ENCODE measurements at regions of chr3 and their contacts with region 1.

Region 1: DNA sequence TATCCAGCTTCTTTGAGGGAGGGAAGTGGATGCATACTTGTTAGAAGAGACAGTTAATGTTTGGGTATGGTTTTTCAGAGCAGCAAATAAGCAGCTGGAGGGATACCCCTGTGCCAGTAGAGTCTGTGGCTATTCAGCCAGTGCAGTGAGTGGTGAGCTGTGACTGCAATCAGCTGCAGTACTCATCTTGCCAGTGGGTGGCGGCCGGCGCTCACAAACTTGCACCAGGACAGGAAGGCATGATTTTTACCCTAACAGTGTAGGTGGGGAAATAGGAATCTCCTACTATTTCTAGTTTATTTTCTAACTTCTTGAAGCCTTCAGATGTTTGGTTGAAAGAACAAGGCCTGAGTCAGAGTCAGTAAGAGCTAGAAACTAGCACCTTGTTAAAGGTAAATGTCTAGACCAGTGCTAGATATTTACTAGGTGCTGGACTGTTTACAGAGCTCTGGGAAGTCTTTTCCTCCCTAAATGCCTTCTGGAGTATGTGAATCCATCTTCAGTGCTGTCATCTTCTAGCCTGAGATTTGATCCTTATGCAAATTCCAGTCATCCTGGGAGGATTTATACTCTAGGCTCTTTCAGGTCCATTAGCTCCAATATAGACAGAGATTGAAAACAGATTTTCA is 23.6 kb downstream of the TIMP4 start:
- DNase-seq: peak; percentile 43
- ATAC-seq: peak; percentile 99
- H3K4me3 ChIP-seq: no peak overlapping the region
- H3K27ac ChIP-seq: no peak overlapping the region
- H3K4me1 ChIP-seq: no peaks in the 10 kb centered on the region
- H3K27me3 ChIP-seq: no peaks in the 10 kb centered on the region
- CTCF ChIP-seq: peak; percentile 90
- EP300 ChIP-seq: no peak
- POLR2A ChIP-seq: no peak
- RAD21 ChIP-seq: peak; percentile 79

Region 2: DNA sequence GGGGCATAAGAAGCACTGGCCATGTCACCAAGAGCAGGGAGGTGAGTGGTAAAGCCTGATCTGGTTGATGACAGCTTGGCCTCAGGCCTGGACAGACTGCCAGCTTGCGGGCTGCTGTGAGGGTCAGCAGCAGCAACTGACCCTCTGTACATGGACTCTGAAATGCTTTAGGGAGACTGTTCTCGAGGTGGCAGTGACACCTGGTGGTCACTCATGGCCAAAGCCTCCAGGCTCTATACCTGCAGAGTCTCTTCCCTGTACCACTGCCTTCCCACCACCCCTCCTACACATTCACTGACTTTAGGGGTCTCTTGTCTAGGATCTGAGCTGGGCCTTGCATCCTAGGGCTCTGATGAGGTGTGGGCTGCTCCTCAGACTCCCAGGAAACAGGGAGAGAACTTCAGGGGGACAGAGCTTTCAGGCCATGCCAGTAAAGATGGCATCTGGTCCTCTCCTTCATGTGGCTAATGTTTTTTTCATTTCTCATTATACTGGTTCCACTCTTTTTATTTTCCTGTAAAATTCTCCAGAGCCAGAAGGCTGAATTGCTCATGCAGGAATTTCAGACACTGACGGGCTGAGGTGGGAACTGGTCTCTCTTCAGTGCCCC is 40.8 kb after region 1 on chr3:
- CTCF ChIA-PET with region 1: interaction called, 33 read pairs
- POLR2A ChIA-PET with region 1: no interaction called
- in situ Hi-C with region 1: loop called (anchors 5 kb)
- intact Hi-C with region 1: loop called (anchors 1 kb)
- DNase-seq: peak; percentile 52
- ATAC-seq: peak; percentile 98
- H3K4me3 ChIP-seq: no peak overlapping the region
- H3K27ac ChIP-seq: no peak overlapping the region
- H3K4me1 ChIP-seq: no peaks in the 10 kb centered on the region
- H3K27me3 ChIP-seq: 0 out of 5 replicates have a peak, but pooled peaks cover 0 to 2% of the 10 kb centered on the region in 2 experiments
- CTCF ChIP-seq: peak; percentile 94
- EP300 ChIP-seq: no peak
- POLR2A ChIP-seq: no peak
- RAD21 ChIP-seq: peak; percentile 78; the same call in 1 of the 2 replicates

Region 3: GRCh38 chr3:12719984-12720898 is 585.1 kb after region 1 on chr3:
- CTCF ChIA-PET with region 1: no interaction called
- POLR2A ChIA-PET with region 1: no interaction called
- in situ Hi-C with region 1: no loop called
- intact Hi-C with region 1: loop called (anchors 5 kb)
- DNase-seq: peak; percentile 84
- ATAC-seq: peak; percentile 98
- H3K4me3 ChIP-seq: no peak overlapping the region
- H3K27ac ChIP-seq: no peak overlapping the region
- H3K4me1 ChIP-seq: peaks cover 10% of the 10 kb centered on the region
- H3K27me3 ChIP-seq: no peaks in the 10 kb centered on the region
- CTCF ChIP-seq: peak; percentile 90
- EP300 ChIP-seq: no peak
- POLR2A ChIP-seq: no peak
- RAD21 ChIP-seq: peak; percentile 48; the same call in 1 of the 2 replicates